Sigmoid colon (tissue), 7 donors: ENCODE measurements at regions of chr13 and their contacts with region 1.

Region 1: GRCh38 chr13:31909864-31910551 is 121.6 kb upstream of the FRY start:
- DNase-seq: no peak
- H3K4me3 ChIP-seq: no peak overlapping the region
- H3K27ac ChIP-seq: no peak overlapping the region
- H3K4me1 ChIP-seq: no peaks in the 10 kb centered on the region
- H3K27me3 ChIP-seq: no peaks in the 10 kb centered on the region
- CTCF ChIP-seq: peak; percentile 45 to 89 (median 75)
- EP300 ChIP-seq: no peak
- POLR2A ChIP-seq: no peak

Region 2: DNA sequence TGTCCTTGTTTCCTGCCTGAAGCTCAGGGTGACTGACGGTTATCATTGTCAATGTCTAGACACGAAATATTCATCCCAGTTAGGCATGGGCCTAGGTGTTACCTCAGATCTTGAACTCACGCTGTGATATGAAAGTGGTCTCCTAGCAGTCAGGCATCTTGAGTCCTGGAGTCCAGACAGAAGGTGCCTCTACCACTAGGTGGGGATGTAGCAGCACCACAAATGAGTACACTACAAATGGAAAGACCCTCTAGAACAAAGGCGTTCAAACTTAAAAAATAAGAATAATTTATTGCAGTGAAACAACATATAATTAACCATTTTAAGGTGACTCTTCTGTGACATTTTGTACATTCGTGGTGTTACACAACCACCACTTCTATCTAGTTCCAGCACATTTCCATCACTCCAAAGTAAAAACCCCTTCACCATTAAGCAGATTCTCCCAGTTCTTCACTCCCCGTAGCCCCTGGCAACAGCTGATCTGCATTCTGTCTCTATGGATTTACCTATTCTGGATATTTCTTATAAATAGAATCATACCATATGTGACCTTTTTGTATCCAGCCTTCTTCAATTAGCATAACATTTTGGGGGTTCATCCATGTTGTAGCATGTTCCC is 109.7 kb after region 1 on chr13:
- intact Hi-C with region 1: loop called (anchors 5 kb)
- DNase-seq: no peak
- H3K4me3 ChIP-seq: no peak overlapping the region
- H3K27ac ChIP-seq: no peak overlapping the region
- H3K4me1 ChIP-seq: peaks cover 0 to 18% (median 4%) of the 10 kb centered on the region in 4 donors
- H3K27me3 ChIP-seq: no peaks in the 10 kb centered on the region
- CTCF ChIP-seq: peak; percentile 52 to 76 (median 64)
- EP300 ChIP-seq: no peak
- POLR2A ChIP-seq: no peak

Region 3: DNA sequence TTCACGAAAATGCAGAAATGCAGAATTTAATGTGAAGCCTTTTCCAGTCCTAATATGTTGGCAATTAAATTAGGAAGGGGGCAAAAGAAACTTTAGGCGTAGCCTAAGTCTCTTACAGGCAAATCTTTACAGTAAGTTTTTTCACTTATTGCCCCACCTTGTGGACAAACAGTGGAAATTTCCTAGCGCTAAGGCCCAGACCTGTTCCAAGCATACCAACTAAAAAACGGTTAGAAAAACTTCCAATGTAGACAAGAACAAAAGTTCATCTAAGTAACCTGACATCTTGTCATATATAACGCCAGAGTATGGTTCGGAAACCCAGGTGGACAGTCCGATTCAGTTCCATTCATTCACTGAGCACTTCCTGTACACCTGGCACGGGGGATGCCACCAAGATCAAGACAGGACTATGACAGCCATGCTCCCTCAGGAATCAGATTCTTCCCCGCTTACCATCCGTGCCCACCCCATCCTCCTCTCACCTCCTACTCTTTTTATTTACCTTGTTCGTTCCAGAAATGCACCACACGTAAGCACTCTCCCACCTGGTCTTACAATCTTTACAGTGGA is 400.2 kb after region 1 on chr13:
- intact Hi-C with region 1: loop called (anchors 2 kb)
- DNase-seq: no peak
- H3K4me3 ChIP-seq: peak overlapping the region; percentile 2 to 33 (median 24)
- H3K27ac ChIP-seq: peak overlapping the region; percentile 54 to 64 (median 62)
- H3K4me1 ChIP-seq: peaks cover 0 to 15% (median 15%) of the 10 kb centered on the region in 4 donors
- H3K27me3 ChIP-seq: no peaks in the 10 kb centered on the region
- CTCF ChIP-seq: peak; percentile 54 to 71 (median 70)
- EP300 ChIP-seq: no peak
- POLR2A ChIP-seq: no peak

Region 4: DNA sequence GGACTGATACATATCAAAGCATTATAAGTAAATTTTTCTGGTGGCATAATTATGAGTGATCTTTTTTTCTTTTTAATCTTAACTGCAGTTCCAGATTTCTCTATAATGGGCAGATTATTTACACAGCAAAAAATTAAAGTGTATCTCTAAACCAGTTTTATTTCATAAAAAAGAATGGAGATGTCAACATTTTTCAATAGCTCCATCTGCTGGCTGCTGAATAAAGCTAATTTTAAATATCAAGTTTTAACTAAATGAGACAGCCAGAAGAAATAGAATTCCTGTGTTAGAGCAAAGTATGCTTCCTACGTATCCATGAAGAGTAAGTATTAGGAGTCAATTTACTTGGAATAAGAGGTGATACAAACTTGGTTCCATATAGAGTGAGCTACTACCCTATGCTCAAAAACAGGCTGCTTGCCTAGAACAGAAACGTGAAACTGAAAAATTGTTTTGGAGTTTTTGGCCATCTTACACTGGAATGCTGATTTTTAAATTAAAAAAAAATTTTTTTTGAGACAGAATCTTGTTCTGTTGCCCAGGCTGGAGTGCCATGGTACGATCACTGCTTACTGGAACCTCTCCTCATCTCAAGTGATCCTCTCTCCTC is 671.3 kb after region 1 on chr13:
- intact Hi-C with region 1: loop called (anchors 5 kb)
- DNase-seq: no peak
- H3K4me3 ChIP-seq: no peak overlapping the region
- H3K27ac ChIP-seq: no peak overlapping the region
- H3K4me1 ChIP-seq: peaks cover 0 to 6% (median 5%) of the 10 kb centered on the region in 4 donors
- H3K27me3 ChIP-seq: no peaks in the 10 kb centered on the region
- CTCF ChIP-seq: peak in 3 of 4 experiments; percentile 5 to 59 (median 34)
- EP300 ChIP-seq: no peak
- POLR2A ChIP-seq: no peak